CD4-positive, alpha-beta T cell (primary cell): ENCODE measurements at regions of chr11 and their contacts with region 1.

Region 1: DNA sequence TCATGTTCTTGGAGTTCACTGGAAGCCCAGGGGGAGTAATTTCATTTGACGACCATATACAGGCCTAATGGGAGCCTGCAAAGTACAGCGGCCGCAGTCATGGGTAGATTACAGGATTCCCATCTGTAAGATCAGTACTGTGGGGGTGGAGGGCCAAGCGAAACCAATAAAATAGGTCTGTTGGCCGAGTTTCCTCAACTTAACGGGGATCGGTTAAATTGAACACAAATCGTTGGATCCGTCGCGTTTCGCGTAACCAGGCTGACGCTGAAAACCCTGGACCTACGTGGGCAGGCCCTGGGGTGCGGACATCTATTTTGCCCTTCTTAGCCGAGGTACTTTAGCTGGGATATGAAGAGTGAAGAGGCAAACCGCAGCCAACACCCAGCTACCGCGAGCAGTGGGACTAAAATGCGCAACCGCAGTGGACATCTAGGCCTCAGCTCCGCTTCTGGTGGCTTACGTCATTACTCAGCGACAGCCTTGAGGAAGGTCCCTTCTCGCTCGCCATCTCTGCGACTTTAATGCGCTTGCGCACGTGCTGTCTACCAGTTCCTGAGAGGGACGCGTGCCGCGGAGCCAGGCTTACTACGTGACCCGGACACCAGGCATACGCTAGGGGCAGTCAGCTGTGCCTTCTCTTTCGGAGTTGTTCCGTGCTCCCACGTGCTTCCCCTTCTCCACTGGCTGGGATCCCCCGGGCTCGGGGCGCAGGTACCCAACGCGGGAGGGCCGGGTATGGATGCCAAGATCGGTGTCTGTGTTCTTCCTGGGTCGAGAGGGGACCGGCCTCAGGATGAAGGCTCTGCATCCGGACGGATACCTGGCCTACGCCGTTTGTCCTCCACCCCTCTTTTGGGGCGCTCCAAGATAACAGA is at the start of gene NAT10:
- DNase-seq: peak; percentile 94 to 100 (median 97)
- ATAC-seq: peak; percentile 90
- H3K4me3 ChIP-seq: peak within 1 kb of the TSS; percentile 81
- H3K4me3 Mint-ChIP-seq: peak within 1 kb of the TSS; percentile 95
- H3K27ac ChIP-seq: peak within 1 kb of the TSS; percentile 91 to 95
- H3K27ac Mint-ChIP-seq: peak within 1 kb of the TSS; percentile 99
- H3K4me1 ChIP-seq: peaks cover 31% of the 10 kb centered on the region
- H3K4me1 Mint-ChIP-seq: peaks cover 69% of the 10 kb centered on the region
- H3K27me3 ChIP-seq: no peaks in the 10 kb centered on the region
- H3K27me3 Mint-ChIP-seq: peaks cover 4% of the 10 kb centered on the region
- CTCF ChIP-seq: no peak
- total RNA-seq, gene NAT10: 50.1 to 55.6 TPM

Region 2: GRCh38 chr11:33257897-33258630 is 847.3 kb before region 1 on chr11:
- CTCF ChIA-PET with region 1: no interaction called
- POLR2A ChIA-PET with region 1: interaction called, 3 read pairs
- intact Hi-C with region 1: loop called in 1 of 2 experiments (anchors 5 kb)
- DNase-seq: peak; percentile 58 to 89 (median 71)
- ATAC-seq: peak; percentile 68
- H3K4me3 ChIP-seq: peak overlapping the region; percentile 88
- H3K4me3 Mint-ChIP-seq: peak overlapping the region; percentile 97
- H3K27ac ChIP-seq: peak overlapping the region; percentile 94 to 97
- H3K27ac Mint-ChIP-seq: peak overlapping the region; percentile 94
- H3K4me1 ChIP-seq: peaks cover 15% of the 10 kb centered on the region
- H3K4me1 Mint-ChIP-seq: peaks cover 55% of the 10 kb centered on the region
- H3K27me3 ChIP-seq: no peaks in the 10 kb centered on the region
- H3K27me3 Mint-ChIP-seq: no peaks in the 10 kb centered on the region
- CTCF ChIP-seq: no peak

Region 3: GRCh38 chr11:33996498-33997454 is 108.5 kb before region 1 on chr11:
- CTCF ChIA-PET with region 1: interaction called, 8 read pairs
- POLR2A ChIA-PET with region 1: interaction called, 13 read pairs
- intact Hi-C with region 1: loop called (anchors 1 to 2 kb)
- DNase-seq: peak; percentile 53 to 85 (median 66)
- ATAC-seq: peak; percentile 100
- H3K4me3 ChIP-seq: no peak overlapping the region
- H3K4me3 Mint-ChIP-seq: peak overlapping the region; percentile 55
- H3K27ac ChIP-seq: no peak overlapping the region
- H3K27ac Mint-ChIP-seq: no peak overlapping the region
- H3K4me1 ChIP-seq: peaks cover 7% of the 10 kb centered on the region
- H3K4me1 Mint-ChIP-seq: peaks cover 7% of the 10 kb centered on the region
- H3K27me3 ChIP-seq: no peaks in the 10 kb centered on the region
- H3K27me3 Mint-ChIP-seq: peaks cover 23% of the 10 kb centered on the region
- CTCF ChIP-seq: peak; percentile 76

Region 4: GRCh38 chr11:34086554-34087283 is 18.6 kb before region 1 on chr11:
- CTCF ChIA-PET with region 1: no interaction called
- POLR2A ChIA-PET with region 1: interaction called, 13 read pairs
- intact Hi-C with region 1: loop called in 1 of 2 experiments (anchors 2 kb)
- DNase-seq: peak in 3 of 14 experiments; percentile 18 to 57 (median 25)
- ATAC-seq: peak; percentile 71
- H3K4me3 ChIP-seq: no peak overlapping the region
- H3K4me3 Mint-ChIP-seq: peak overlapping the region; percentile 45
- H3K27ac ChIP-seq: no peak overlapping the region
- H3K27ac Mint-ChIP-seq: peak overlapping the region; percentile 76
- H3K4me1 ChIP-seq: peaks cover 3% of the 10 kb centered on the region
- H3K4me1 Mint-ChIP-seq: peaks cover 20% of the 10 kb centered on the region
- H3K27me3 ChIP-seq: no peaks in the 10 kb centered on the region
- H3K27me3 Mint-ChIP-seq: no peaks in the 10 kb centered on the region
- CTCF ChIP-seq: no peak

Region 5: GRCh38 chr11:34438529-34439507 is 333.5 kb after region 1 on chr11 and contains the start of gene CAT:
- CTCF ChIA-PET with region 1: no interaction called
- POLR2A ChIA-PET with region 1: interaction called, 3 read pairs
- intact Hi-C with region 1: loop called (anchors 1 to 5 kb)
- DNase-seq: peak; percentile 93 to 98 (median 98)
- ATAC-seq: peak; percentile 95
- H3K4me3 ChIP-seq: peak within 1 kb of the TSS; percentile 81
- H3K4me3 Mint-ChIP-seq: peak within 1 kb of the TSS; percentile 93
- H3K27ac ChIP-seq: peak within 1 kb of the TSS; percentile 57 to 77
- H3K27ac Mint-ChIP-seq: peak within 1 kb of the TSS; percentile 88
- H3K4me1 ChIP-seq: peaks cover 22% of the 10 kb centered on the region
- H3K4me1 Mint-ChIP-seq: peaks cover 47% of the 10 kb centered on the region
- H3K27me3 ChIP-seq: no peaks in the 10 kb centered on the region
- H3K27me3 Mint-ChIP-seq: no peaks in the 10 kb centered on the region
- CTCF ChIP-seq: no peak
- total RNA-seq, gene CAT: 8.5 to 9.8 TPM